OCI-LY7 (cell line): ENCODE measurements at regions of chr2 and their contacts with region 1.

Region 1: GRCh38 chr2:176934869-176935415 is 277.7 kb upstream of the HNRNPA3 start:
- DNase-seq: no peak
- H3K4me3 ChIP-seq: no peak overlapping the region
- H3K27ac ChIP-seq: no peak overlapping the region
- H3K4me1 ChIP-seq: no peaks in the 10 kb centered on the region
- CTCF ChIP-seq: no peak

Region 2: DNA sequence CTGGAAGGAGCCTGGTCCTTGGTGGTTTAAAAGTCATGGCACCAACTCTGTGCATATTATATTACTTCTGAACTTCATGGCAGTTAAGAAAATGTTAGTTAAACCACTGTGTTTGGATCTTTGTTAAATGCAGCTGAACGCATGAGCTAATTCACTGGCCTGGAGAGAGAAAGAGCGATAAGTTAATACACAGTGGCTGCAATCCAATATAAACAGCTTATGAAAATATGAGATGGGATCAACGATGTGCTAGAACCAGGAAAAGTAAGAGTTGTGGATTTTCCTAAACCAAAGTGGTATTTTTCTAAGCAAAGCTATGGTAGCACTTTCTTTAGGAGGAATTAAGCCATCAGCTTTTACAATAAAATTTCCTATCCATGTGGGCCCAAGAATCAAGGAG is 339.0 kb before region 1 on chr2:
- CTCF ChIA-PET with region 1: no interaction called
- POLR2A ChIA-PET with region 1: no interaction called
- intact Hi-C with region 1: loop called (anchors 5 kb)
- DNase-seq: no peak
- H3K4me3 ChIP-seq: no peak overlapping the region
- H3K27ac ChIP-seq: no peak overlapping the region
- H3K4me1 ChIP-seq: no peaks in the 10 kb centered on the region
- CTCF ChIP-seq: no peak

Region 3: DNA sequence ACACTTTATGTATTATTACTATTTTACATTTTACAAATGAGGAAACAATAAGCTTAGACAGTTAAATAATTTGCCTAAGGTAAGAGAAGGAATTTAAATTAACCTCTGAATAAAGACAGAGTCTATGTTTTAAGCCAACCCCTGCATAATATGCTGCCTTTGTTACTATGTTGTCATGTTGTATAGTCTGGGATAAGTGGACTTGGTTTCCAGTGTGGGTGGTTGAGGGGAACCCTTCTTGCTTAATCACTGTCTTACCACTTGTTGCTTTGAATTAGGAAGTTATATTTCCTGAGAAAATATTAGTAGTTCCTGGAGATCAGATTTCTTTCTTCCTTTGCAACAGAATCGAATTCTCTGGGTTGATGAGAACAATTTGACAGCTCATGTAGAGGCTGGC is 510.3 kb after region 1 on chr2:
- CTCF ChIA-PET with region 1: no interaction called
- POLR2A ChIA-PET with region 1: no interaction called
- intact Hi-C with region 1: no loop called
- DNase-seq: no peak
- H3K4me3 ChIP-seq: no peak overlapping the region
- H3K27ac ChIP-seq: no peak overlapping the region
- H3K4me1 ChIP-seq: no peaks in the 10 kb centered on the region
- CTCF ChIP-seq: no peak